Activated naive CD4-positive, alpha-beta T cell treated with anti-CD3 and anti-CD28 coated beads for 36 hours (primary cell): ENCODE measurements at regions of chr19 and their contacts with region 1.

Region 1: GRCh38 chr19:57389730-57390598 is at the start of gene ZNF548:
- DNase-seq: peak; percentile 94
- H3K4me3 Mint-ChIP-seq: peak within 1 kb of the TSS; percentile 88
- H3K27ac Mint-ChIP-seq: peak within 1 kb of the TSS; percentile 87
- H3K4me1 Mint-ChIP-seq: peaks cover 20% of the 10 kb centered on the region
- H3K27me3 Mint-ChIP-seq: no peaks in the 10 kb centered on the region
- total RNA-seq, gene ZNF548: 11.9 to 13.3 TPM

Region 2: DNA sequence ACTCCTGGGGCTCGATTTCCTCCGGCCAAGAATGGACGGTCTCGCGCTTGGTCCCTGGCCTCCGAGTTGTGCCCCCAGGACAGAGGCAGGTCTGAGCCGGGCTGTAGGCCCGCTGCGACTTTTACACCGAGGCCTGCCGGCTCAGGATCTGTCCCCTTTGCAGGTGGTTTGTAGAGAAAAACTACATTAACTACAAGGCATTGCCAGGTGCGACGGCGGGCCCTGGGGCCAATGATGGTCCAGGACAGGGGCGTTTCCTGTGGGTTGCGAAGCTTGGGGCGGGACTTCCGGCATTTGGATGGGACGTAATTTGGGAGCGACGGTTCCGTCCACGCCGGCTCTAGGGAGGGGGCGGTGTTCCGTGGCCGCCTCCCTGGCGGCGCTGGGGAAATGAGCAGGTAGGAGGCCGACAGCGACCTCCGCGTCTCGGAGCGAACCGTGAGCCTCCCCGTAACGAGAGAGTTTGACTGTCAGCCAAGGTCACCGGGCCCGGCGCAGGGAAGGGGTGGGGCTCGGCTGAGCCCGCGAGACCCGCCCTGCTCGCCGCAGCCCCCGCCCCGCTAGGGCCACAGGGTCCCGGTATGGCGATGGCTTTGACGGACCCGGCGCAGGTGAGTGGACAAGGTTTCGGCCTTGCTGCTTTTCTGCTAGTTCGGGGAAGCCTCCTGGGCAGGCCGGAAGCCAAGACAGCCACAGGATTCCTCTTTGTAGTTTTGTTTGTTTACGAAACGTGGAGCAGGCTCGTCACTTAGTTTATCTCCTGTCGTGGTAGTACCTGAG is 149.5 kb before region 1 on chr19 and contains the start of gene ZNF805:
- CTCF ChIA-PET with region 1: no interaction called
- intact Hi-C with region 1: loop called (anchors 1 kb)
- DNase-seq: peak; percentile 95
- H3K4me3 Mint-ChIP-seq: peak within 1 kb of the TSS; percentile 74
- H3K27ac Mint-ChIP-seq: peak within 1 kb of the TSS; percentile 70
- H3K4me1 Mint-ChIP-seq: peaks cover 22% of the 10 kb centered on the region
- H3K27me3 Mint-ChIP-seq: no peaks in the 10 kb centered on the region
- total RNA-seq, gene ZNF805: 6.0 to 6.5 TPM

Region 3: DNA sequence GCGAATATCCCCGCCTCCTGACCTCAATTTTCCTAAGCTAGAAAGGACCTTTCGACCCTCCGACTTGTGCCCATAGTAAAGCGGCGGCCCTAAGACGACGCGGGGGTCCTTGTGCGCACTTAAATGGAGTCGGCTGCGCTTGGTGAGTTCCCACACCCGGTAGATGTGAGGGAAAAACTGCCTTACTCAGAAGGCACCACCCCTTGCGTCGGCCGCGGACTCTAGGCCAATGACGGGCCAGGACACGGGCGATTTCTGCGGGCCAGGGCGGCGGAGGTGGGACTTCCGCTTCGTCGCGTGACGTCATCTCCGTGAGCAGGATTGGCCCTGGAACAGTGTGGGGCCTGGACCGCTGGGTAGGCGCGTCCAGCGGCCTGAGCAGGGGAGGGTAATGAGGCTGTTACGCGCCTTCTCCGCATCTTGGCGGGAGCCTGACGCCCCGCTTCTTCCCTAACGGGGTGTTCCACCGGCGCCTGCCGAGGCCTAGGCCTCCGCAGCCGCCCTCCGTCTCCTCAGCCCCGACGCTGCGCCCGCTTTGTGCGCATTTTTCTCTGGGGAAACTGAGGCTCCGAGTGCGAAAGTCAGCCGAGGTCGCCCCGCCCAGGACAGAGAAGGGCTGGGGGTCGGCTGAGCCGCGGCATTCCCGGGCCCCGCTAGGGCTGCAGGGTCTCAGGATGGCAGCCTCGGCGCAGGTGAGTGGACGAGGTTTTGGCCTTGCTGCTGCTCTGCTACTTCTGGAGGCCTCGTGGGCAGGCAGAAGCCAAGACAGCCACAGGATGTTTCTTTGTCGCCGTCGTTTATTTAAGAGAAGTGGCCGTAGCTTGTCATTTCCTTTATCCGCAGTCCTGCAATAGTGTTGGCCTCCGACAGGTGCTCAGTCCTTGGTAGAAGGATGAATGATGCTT is 69.5 kb before region 1 on chr19 and contains the start of gene ZNF543:
- CTCF ChIA-PET with region 1: no interaction called
- intact Hi-C with region 1: loop called (anchors 1 kb)
- DNase-seq: peak; percentile 95
- H3K4me3 Mint-ChIP-seq: peak within 1 kb of the TSS; percentile 84
- H3K27ac Mint-ChIP-seq: peak within 1 kb of the TSS; percentile 84
- H3K4me1 Mint-ChIP-seq: peaks cover 21% of the 10 kb centered on the region
- H3K27me3 Mint-ChIP-seq: peaks cover 27% of the 10 kb centered on the region
- total RNA-seq, gene ZNF543: 3.2 to 3.5 TPM

Region 4: DNA sequence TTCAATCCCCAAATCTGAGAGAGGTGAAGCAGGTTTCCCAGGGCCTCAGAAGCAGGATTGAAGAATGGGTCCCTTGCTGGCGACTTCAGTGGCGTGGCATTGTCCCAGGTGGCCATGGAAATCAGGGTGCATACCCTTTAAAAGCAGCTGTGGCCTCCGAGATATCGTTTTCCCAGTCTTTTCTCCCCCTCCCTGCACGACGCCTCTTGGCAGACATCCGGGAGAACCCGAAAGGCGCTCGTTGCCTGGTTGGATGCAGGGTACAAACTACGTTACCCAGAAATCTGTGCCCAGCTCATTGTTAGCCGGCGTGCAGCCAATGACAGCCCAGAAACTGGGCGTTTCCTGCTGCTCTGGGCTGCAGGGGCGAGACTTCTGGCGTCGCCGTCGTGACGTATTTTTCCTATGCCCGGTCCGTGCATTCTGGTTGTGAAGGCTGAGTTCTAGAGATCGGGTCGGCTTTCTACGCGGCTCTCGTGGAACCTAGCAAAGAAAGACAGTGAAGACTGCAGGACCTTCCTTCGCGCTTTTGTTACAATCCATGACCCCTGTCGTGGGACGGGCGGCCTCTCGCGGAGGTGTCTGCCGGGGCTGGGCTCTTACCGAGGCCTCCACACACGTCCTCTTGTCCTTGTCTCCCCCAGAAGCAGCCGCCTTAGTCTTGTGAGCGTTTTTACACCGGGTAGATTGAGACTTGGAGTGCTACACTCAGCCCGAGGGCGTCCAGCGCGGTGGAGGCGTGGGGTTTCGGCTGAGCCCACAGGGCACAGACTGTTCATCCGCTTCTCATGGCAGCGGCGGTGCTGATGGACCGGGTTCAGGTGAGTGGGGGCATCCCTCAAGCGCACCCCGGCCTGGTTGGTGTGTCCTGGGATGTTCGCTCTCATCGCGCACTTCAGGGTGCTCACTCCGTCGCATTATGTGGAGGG is 38.8 kb before region 1 on chr19 and contains the start of gene ZNF304:
- CTCF ChIA-PET with region 1: no interaction called
- intact Hi-C with region 1: loop called (anchors 1 kb)
- DNase-seq: peak; percentile 89
- H3K4me3 Mint-ChIP-seq: peak within 1 kb of the TSS; percentile 88
- H3K27ac Mint-ChIP-seq: peak within 1 kb of the TSS; percentile 72
- H3K4me1 Mint-ChIP-seq: peaks cover 25% of the 10 kb centered on the region
- H3K27me3 Mint-ChIP-seq: no peaks in the 10 kb centered on the region
- total RNA-seq, gene ZNF304: 3.3 to 3.6 TPM

Region 5: DNA sequence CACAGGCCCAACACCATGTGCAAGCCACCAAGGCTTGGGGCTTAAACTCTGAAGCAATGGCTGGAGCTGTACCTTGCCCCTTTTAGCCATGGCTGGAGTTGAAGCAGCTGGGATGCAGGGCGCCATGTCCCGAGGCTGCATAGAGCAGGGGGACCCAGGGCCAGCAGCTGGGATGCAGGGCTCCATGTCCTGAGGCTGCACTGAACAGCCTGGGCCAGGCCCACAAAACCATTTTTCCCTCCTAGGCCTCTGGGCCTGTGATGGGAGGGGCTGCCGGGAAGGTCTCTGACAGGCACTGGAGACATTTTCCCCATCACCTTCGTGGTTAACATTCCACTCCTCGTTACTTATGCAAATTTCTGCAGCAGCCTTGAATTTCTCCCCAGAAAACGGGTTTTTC is 15.8 kb before region 1 on chr19:
- CTCF ChIA-PET with region 1: no interaction called
- intact Hi-C with region 1: no loop called
- DNase-seq: no peak
- H3K4me3 Mint-ChIP-seq: no peak overlapping the region
- H3K27ac Mint-ChIP-seq: no peak overlapping the region
- H3K4me1 Mint-ChIP-seq: no peaks in the 10 kb centered on the region
- H3K27me3 Mint-ChIP-seq: no peaks in the 10 kb centered on the region

Region 6: DNA sequence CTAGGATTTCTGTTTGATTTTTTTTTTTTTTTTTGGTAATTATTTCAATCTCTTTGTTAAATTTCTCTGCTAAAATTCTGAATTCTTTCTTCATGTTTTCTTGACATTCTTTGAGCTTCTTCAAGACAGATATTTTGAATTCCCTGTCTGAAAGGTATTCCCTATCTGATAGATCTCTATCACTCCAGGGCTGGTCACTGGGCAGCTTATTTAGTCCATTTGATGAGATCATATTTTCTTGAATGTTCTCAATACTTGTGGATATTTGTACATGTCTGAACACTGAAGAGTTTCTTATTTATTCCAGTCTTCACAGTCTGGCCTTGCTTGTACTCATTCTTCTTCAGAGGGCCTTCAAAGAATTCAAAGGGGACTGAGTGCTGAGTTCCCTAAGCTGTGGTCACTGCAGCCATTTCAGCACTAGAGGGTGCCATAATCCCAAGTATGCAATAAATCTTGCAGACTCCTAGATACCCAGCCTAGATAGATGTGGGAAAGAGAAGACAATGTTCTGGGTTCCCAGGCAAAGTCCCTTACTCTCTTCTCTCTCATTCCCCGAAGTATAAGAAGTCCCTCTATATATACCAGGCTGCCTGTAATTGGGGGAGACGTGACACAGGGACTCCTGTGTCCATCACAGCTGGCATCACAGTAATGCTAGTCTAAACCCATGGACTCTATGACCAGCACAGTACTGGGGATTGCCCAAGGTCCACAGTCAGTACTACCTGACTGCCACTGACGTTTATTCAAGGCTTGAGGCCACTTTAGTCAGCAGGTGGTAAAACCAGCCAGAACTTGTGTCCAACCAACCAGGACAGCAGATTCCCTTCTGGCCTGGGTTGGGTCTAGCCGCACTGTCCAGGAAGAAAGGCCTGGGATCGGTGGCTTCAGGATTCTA is 75.8 kb after region 1 on chr19:
- CTCF ChIA-PET with region 1: no interaction called
- intact Hi-C with region 1: no loop called
- DNase-seq: peak; percentile 30
- H3K4me3 Mint-ChIP-seq: no peak overlapping the region
- H3K27ac Mint-ChIP-seq: no peak overlapping the region
- H3K4me1 Mint-ChIP-seq: no peaks in the 10 kb centered on the region
- H3K27me3 Mint-ChIP-seq: no peaks in the 10 kb centered on the region

Region 7: DNA sequence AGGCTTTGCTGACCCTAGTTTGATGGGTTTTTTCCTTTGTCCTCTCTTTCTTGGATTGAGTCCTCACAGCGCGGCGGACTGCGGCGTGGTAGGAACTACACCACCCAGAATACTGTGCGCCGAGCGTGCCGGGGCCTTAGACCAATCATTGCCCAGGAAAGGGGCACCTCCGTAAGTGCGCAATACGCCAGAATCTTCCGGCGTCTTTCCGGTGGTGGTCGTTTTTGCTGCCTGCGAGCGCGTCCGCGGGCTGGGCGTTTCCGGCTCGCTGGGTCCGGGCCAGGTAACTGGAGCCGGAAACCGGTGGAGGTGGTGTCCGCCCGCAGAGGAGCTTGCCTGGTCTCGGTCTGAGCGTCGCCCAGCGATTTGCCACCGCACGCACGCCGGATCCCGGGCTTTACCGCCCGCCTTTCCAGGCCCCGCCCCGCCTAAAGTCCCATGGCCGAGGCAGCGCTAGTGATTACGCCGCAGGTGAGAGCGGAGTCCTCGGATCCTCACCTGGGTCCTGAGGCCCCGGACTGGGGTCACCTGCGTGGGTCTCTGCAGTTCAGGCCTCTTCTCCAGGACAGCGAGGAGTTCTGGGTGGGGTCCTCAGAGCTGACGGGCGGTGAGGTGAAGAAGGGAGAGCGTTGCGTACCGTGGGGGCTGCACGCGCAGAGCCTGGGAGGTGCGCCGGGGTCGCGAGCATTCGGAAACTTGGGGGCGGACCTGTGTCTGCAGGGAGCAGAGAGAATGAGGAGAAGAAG is 137.3 kb after region 1 on chr19 and contains the start of gene ZNF549:
- CTCF ChIA-PET with region 1: no interaction called
- intact Hi-C with region 1: loop called (anchors 1 kb)
- DNase-seq: peak; percentile 91
- H3K4me3 Mint-ChIP-seq: peak within 1 kb of the TSS; percentile 80
- H3K27ac Mint-ChIP-seq: peak within 1 kb of the TSS; percentile 70
- H3K4me1 Mint-ChIP-seq: peaks cover 14% of the 10 kb centered on the region
- H3K27me3 Mint-ChIP-seq: no peaks in the 10 kb centered on the region
- total RNA-seq, gene ZNF549: 1.8 TPM